Mammary epithelial cell (primary cell): ENCODE measurements at regions of chr5 and their contacts with region 1.

Region 1: DNA sequence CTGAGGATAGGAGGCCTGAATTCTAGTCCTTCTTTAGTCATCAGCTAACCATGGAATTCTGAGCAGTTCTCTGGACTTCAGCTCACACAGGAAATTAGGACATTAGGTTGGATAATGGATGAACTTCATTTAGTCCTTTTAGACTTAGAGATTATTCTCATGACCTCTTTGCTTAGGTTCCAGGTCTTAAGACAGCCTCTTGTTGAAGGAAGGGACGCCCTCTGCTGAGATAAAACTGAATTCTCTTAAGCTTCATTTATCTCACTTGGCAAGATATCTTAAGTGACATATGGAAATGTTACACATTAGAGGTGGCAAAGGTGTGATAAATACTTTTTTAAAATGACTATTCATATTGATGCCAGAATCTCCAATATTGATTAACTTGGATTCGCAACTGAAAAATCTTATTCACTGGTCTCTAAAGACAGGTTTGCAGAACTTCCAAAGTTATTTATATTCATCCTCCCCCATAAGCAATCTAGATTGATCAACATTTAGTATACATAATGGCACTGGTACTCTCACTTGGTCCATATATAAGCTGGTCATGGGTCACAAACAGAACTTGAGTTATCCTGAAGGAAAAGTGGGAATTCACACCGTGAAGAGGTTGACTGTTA is 16.9 kb upstream of the ZNF366 start:
- DNase-seq: peak; percentile 53
- H3K4me3 ChIP-seq: no peak overlapping the region
- H3K27ac ChIP-seq: no peak overlapping the region
- H3K4me1 ChIP-seq: peaks cover 7% of the 10 kb centered on the region
- H3K27me3 ChIP-seq: no peaks in the 10 kb centered on the region
- CTCF ChIP-seq: peak; percentile 62 to 67

Region 2: DNA sequence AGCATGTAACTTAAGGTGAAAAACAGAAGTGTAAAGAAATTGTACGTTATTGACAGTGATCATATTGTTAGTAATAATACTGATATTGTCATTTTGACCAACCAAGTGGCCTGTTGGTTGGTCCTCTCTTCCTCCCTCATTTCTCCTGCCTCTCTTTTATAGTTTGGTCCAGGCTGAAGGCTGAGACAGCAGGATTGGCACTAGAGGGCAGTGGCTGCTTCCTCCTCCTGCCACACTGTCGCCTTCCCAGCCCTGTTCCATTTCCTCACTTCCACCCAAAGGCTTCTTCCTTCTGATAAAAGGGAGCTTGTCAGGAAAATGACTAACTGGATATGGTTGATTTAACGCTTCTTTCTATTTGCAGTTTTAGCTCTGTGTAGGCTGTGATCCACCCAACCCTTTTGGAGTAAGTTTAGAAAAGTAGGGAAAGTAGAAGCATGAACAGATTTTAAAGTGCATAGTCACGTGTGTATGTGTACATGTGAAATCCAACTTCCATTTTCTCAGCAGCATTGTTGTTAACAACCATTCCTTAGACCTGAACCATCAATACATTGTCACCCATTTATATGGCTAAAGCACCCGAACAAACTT is 168.3 kb before region 1 on chr5:
- CTCF ChIA-PET with region 1: no interaction called
- dilution Hi-C with region 1: no loop called
- in situ Hi-C with region 1: no loop called
- intact Hi-C with region 1: loop called (anchors 1 kb)
- DNase-seq: peak; percentile 21
- H3K4me3 ChIP-seq: no peak overlapping the region
- H3K27ac ChIP-seq: no peak overlapping the region
- H3K4me1 ChIP-seq: no peaks in the 10 kb centered on the region
- H3K27me3 ChIP-seq: no peaks in the 10 kb centered on the region
- CTCF ChIP-seq: peak; percentile 43 to 76

Region 3: GRCh38 chr5:72378636-72379290 is 145.3 kb before region 1 on chr5:
- CTCF ChIA-PET with region 1: interaction called, 4 read pairs
- dilution Hi-C with region 1: no loop called
- in situ Hi-C with region 1: loop called (anchors 10 kb)
- intact Hi-C with region 1: no loop called
- DNase-seq: peak; percentile 83
- H3K4me3 ChIP-seq: no peak overlapping the region
- H3K27ac ChIP-seq: peak overlapping the region; percentile 58
- H3K4me1 ChIP-seq: peaks cover 40% of the 10 kb centered on the region
- H3K27me3 ChIP-seq: no peaks in the 10 kb centered on the region
- CTCF ChIP-seq: no peak

Region 4: DNA sequence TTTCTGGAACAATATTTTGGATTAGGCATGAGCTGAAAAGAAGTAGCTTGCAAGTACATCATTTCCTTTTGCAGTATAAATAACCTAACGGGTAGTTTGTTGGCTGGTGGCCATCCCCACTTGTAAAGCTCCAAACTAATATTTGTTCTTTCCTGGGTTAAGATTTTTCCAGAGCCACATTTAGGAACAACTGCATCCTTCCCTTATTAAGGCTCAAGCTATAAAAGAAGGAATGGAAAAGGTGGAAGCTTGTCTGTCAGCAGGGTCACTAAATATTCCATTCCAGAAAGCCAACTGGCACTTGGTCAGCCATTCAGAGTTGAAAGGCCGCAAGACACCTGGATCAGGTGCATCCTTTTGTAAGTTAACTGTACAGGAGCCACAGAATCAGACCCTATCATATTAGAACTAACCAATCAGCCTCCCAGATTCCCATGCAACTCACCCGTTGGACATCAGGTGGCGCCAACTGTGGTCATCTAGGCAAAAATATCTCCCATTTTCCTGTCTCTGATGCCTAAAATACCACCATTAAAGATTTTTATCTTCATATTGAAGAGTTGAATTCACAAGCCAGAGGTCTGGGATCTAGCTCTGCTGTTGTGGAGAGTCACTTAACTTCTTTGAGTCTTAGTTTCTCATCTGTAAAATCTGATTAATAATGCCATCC is 121.0 kb before region 1 on chr5:
- CTCF ChIA-PET with region 1: interaction called, 8 read pairs
- dilution Hi-C with region 1: no loop called
- in situ Hi-C with region 1: no loop called
- intact Hi-C with region 1: loop called (anchors 1 kb)
- DNase-seq: no peak
- H3K4me3 ChIP-seq: no peak overlapping the region
- H3K27ac ChIP-seq: peak overlapping the region; percentile 76
- H3K4me1 ChIP-seq: peaks cover 17% of the 10 kb centered on the region
- H3K27me3 ChIP-seq: no peaks in the 10 kb centered on the region
- CTCF ChIP-seq: peak; percentile 63 to 64

Region 5: GRCh38 chr5:72556351-72557166 is 32.5 kb after region 1 on chr5:
- CTCF ChIA-PET with region 1: no interaction called
- dilution Hi-C with region 1: no loop called
- in situ Hi-C with region 1: no loop called
- intact Hi-C with region 1: no loop called
- DNase-seq: no peak
- H3K4me3 ChIP-seq: peak overlapping the region in 1 of 3 experiments; percentile 31
- H3K27ac ChIP-seq: peak overlapping the region; percentile 13
- H3K4me1 ChIP-seq: peaks cover 29% of the 10 kb centered on the region
- H3K27me3 ChIP-seq: no peaks in the 10 kb centered on the region
- CTCF ChIP-seq: peak in 1 of 2 donors; percentile 17

Region 6: GRCh38 chr5:72702871-72703434 is 178.9 kb after region 1 on chr5:
- CTCF ChIA-PET with region 1: no interaction called
- dilution Hi-C with region 1: no loop called
- in situ Hi-C with region 1: no loop called
- intact Hi-C with region 1: no loop called
- DNase-seq: no peak
- H3K4me3 ChIP-seq: no peak overlapping the region
- H3K27ac ChIP-seq: no peak overlapping the region
- H3K4me1 ChIP-seq: no peaks in the 10 kb centered on the region
- H3K27me3 ChIP-seq: no peaks in the 10 kb centered on the region
- CTCF ChIP-seq: no peak

Region 7: DNA sequence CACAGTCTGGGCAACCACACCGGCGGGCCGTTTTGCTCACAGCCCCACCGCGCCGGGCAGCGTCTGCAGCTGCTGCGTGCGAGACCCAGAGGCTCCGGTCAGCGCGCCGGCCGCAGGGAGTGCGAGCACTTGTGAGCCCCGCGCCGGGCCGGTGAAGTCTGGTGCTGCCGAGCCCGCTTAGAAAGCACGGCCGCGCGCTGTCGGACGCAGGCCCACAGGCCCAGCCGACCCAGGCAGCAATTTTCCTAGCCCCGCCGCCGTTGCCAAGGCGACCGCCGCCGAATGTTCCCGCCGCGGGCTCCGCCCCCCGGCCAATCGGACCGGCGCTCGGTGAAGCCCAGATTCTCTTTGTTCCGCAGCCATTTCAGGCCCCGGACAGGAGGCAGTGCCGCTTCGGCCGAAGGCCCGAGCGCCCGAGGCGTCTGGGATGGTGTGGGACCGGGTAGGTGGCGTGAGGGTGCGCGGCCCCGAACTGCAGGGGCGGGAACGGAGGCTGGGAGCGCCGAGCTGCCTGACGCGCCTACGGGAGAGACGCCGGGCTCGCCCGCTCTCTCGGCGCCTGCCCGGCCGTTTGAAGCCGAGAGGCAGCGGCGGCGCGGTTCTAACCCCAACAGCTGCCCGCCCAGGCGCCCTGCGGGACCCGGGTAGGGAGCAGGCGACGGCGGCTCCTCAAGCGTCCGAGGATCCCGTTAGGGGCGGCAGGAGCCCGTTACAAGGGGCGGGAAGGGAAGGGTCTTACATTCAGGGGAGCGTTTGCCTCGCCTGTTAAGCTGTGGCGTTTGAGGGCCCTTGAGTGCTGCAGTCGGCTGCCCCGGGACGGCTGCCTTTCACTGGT is 292.5 kb after region 1 on chr5 and contains the start of gene TNPO1:
- CTCF ChIA-PET with region 1: no interaction called
- dilution Hi-C with region 1: no loop called
- in situ Hi-C with region 1: no loop called
- intact Hi-C with region 1: loop called (anchors 2 kb)
- DNase-seq: peak; percentile 93
- H3K4me3 ChIP-seq: peak within 1 kb of the TSS; percentile 79 to 96 (median 90)
- H3K27ac ChIP-seq: peak within 1 kb of the TSS; percentile 95
- H3K4me1 ChIP-seq: peaks cover 6% of the 10 kb centered on the region
- H3K27me3 ChIP-seq: no peaks in the 10 kb centered on the region
- CTCF ChIP-seq: no peak
- total RNA-seq, gene TNPO1: 126 to 179 TPM